ENCODE measurements at regions of chr6 and their contacts with region 1.

Region 1: GRCh38 chr6:111377558-111378120 is 105.4 kb downstream of the REV3L start:
- DNase-seq: no peak
- H3K4me3 Mint-ChIP-seq: no peak overlapping the region
- H3K27ac Mint-ChIP-seq: no peak overlapping the region
- H3K4me1 Mint-ChIP-seq: peaks cover 32% of the 10 kb centered on the region
- H3K27me3 Mint-ChIP-seq: no peaks in the 10 kb centered on the region

Region 2: GRCh38 chr6:111306104-111306888 is 71.3 kb before region 1 on chr6:
- intact Hi-C with region 1: no loop called
- DNase-seq: no peak
- H3K4me3 Mint-ChIP-seq: no peak overlapping the region
- H3K27ac Mint-ChIP-seq: no peak overlapping the region
- H3K4me1 Mint-ChIP-seq: peaks cover 9% of the 10 kb centered on the region
- H3K27me3 Mint-ChIP-seq: no peaks in the 10 kb centered on the region

Region 3: DNA sequence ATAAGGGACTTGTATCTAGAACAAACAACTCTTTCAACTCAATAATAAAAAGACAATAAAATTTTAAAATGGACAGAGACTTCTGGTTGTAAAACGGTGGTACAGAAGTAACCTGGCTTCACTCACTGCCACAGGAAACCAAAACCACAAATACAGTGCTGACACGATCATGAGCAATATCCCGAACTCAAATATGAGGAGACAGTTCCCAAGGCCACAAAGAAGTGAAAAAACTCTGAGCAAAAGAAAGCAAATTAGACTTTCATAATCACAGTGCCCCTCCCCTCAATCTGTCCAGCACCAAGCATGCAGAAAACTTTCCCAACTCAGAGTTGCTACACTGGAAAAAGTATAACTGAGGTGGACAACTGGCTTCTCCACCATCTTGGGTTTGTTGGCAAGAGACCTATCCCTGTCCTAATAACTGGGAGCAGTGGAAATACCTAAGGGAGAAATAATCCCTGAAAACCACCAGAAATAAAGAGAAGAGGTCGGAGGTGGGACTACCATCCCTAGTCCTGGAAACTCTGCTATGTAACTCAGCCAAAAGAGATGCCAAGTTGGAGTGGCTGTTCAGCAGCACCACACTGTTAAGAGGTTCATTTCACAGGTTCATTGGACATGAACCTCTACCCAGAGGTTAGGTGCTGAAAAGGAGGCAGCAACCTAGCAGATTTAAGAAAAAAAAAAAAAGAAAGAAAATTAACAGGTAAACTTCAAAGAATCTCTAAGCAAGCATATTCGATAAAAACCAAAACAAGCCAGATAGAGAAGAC is 49.9 kb after region 1 on chr6:
- intact Hi-C with region 1: loop called (anchors 5 kb)
- DNase-seq: no peak
- H3K4me3 Mint-ChIP-seq: peak overlapping the region; percentile 49
- H3K27ac Mint-ChIP-seq: peak overlapping the region; percentile 14
- H3K4me1 Mint-ChIP-seq: peaks cover 55% of the 10 kb centered on the region
- H3K27me3 Mint-ChIP-seq: no peaks in the 10 kb centered on the region